RWPE1 (cell line): ENCODE measurements at regions of chr20 and their contacts with region 1.

Region 1: GRCh38 chr20:49888345-49888966 is 26.9 kb downstream of the SPATA2 start:
- DNase-seq: peak; percentile 77
- H3K27ac ChIP-seq: peak overlapping the region; percentile 42
- CTCF ChIP-seq: peak; percentile 98

Region 2: GRCh38 chr20:49541733-49542513 is 346.5 kb before region 1 on chr20:
- CTCF ChIA-PET with region 1: interaction called, 34 read pairs
- POLR2A ChIA-PET with region 1: no interaction called
- DNase-seq: peak; percentile 88
- H3K27ac ChIP-seq: no peak overlapping the region
- CTCF ChIP-seq: peak; percentile 96

Region 3: DNA sequence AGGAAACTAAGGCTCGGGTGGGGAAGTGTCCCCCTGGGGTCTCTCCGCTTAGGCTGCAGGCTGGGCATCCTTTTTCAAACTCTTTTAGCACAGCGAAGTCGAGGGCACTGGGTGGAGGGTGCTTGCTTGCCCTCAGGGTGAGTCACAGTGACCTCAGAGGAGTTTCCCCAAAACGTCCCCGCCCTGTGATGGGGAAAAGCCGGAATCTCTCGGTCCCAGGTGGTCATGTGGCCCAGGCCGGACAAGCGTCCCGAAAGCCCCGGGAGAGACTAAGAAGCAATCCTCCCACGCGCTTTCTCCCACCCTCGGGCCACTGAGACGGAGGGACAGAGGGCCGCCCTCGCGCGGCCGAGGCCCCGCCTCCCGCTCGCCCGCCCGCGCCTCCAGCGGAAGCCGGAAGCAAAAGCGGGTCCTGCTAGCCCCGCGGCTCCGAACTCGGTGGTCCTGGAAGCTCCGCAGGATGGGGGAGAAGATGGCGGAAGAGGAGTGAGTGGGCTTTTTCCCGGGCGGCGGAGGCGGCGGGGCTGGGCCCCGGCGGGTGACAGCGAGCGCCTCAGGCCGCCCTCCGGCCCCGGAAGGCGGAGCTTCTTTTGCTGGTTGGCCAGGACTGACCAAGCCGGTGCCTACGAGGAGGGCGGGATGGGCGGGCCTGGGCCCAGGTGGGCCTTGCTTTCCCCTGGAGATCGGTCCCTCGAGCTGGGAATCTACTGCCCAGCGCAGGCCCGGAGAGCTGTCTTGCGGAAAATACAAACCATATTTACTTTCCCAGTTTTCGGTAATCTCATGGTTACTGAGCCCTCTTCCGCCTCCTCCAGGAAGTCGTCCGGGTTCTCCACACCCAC is 75.8 kb before region 1 on chr20 and contains the start of gene SLC9A8:
- CTCF ChIA-PET with region 1: interaction called, 11 read pairs
- POLR2A ChIA-PET with region 1: no interaction called
- DNase-seq: peak; percentile 95
- H3K27ac ChIP-seq: peak within 1 kb of the TSS; percentile 91
- CTCF ChIP-seq: peak; percentile 58

Region 4: DNA sequence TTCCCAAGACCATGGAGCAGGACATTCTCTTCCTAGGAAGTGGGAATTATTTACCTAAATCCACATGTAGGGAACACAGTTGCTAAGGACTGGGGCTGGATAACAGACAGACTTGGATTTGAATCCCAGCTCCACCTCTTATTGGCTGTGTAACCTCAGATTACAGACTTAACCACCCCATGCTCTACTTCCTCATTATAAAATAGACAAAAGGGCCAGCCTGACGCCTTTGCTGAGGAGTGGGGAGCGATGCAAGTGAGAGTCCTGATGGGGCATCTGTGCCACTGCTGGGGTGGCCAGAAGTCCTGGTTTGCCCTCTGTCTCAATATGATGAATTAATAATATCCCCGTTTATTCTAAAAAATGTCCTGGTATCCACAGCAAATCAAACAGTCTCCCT is 19.9 kb before region 1 on chr20:
- CTCF ChIA-PET with region 1: interaction called, 12 read pairs
- POLR2A ChIA-PET with region 1: interaction called, 3 read pairs
- DNase-seq: no peak
- H3K27ac ChIP-seq: no peak overlapping the region
- CTCF ChIP-seq: no peak

Region 5: DNA sequence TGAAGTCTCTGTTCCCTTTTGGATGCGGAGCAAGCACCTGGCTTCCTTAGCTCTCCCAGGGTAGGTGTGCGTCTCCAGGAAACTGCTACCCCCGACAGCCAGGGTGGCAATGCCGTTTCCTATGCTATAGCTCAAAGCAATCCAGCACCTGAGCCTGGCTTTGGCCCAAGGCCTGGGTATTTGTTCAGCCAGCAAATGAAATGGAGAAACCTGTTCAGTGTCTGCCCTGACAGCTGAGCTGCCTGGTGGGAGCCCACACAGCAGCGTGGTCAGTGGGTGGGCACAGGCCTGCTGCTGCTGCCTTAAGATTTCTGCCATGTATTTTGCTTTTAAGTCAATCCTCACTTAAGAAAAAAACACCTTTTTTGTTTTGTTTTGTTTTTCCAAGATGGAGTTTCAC is 13.1 kb after region 1 on chr20:
- CTCF ChIA-PET with region 1: interaction called, 26 read pairs
- POLR2A ChIA-PET with region 1: no interaction called
- DNase-seq: no peak
- H3K27ac ChIP-seq: peak overlapping the region; percentile 13; the same call in 1 of the 2 replicates
- CTCF ChIP-seq: no peak